PC-9 (cell line): ENCODE measurements at regions of chr3 and their contacts with region 1.

Region 1: GRCh38 chr3:149455989-149456388 is 18.5 kb upstream of the TM4SF4 start:
- DNase-seq: no peak
- H3K4me3 ChIP-seq: no peak overlapping the region
- H3K27ac ChIP-seq: no peak overlapping the region
- H3K4me1 ChIP-seq: 0 out of 2 replicates have a peak, but pooled peaks cover 9% of the 10 kb centered on the region
- H3K27me3 ChIP-seq: no peaks in the 10 kb centered on the region
- CTCF ChIP-seq: no peak

Region 2: DNA sequence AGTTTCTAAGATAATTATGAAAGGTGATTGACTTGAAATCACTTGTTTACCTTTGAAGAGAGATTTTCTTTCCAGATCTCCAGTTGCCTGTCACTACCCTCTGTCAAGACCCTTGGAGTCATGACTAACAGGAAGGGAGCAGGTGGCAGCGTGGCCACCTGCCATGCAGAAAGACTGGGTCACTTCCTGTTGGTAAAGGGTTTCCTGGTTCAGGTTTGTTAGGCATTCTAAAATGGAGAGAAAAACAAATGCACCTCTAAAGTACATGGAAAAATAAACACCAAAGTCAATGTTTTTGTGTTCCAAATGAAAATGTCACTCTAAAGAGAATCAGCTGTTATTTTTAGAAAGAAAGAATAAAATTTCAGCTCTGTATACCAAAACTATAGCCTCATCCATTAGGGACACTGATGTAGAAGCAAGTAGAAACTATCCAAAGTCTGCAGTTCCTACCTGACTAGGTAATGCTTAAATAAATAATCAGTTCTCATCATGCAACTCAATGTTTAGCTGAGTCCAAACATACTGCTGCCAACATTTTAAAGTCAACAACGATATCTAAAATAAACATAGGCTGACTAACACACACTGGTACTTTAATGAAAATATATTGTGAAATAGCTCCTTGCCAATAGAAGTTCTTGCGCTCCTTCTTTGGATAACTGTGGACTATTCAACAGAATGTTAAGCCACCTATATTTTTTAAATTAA is 54.6 kb before region 1 on chr3:
- CTCF ChIA-PET with region 1: interaction called, 3 read pairs
- POLR2A ChIA-PET with region 1: interaction called, 13 read pairs
- intact Hi-C with region 1: no loop called
- DNase-seq: peak; percentile 33 to 97
- H3K4me3 ChIP-seq: peak overlapping the region; percentile 30; the same call in 1 of the 2 replicates
- H3K27ac ChIP-seq: peak overlapping the region; percentile 94
- H3K4me1 ChIP-seq: peaks cover 45% of the 10 kb centered on the region
- H3K27me3 ChIP-seq: no peaks in the 10 kb centered on the region
- CTCF ChIP-seq: no peak